ENCODE measurements at regions of chr22 and their contacts with region 1.

Region 1: DNA sequence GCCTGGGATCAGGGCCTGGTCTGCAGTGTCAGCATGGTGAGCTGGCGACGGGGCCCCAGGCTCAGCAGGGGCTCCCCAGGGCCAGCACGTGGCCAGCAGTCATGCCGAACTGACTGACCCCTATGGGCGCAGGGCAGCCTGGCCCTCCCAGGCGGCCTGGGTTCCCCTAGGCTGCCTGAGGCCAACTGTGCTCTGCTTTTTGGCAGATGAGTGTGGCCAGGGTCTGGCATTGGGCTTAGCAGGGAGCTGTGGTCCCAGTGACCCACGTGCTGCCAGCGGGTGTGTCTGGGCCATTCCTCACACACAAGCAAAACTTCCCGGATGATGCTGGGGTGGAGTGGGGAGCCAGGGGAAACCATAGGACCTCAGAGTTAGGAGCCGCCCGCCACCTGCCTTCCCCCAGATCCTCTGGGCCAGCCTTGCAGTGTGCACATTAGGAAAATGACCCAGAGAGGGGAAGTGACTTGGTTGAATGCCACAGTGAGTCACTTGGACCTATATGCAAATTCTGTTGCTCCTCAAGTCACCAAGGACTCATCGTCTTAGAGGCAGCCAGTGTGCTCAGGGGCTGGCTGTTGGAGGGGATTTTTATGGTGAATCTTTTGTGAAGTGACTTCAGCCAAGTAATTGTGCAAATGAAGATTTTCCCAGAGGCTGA is 6.5 kb downstream of the ADORA2A start:
- DNase-seq: no peak
- ATAC-seq: peak; percentile 81
- H3K4me3 Mint-ChIP-seq: peak overlapping the region; percentile 70
- H3K27ac Mint-ChIP-seq: peak overlapping the region; percentile 99
- H3K4me1 Mint-ChIP-seq: peaks cover 92% of the 10 kb centered on the region
- H3K27me3 Mint-ChIP-seq: no peaks in the 10 kb centered on the region

Region 2: GRCh38 chr22:24011735-24012068 is 422.2 kb before region 1 on chr22:
- CTCF ChIA-PET with region 1: no interaction called
- POLR2A ChIA-PET with region 1: no interaction called
- intact Hi-C with region 1: loop called in 1 of 2 experiments (anchors 5 kb)
- DNase-seq: no peak
- ATAC-seq: no peak
- H3K4me3 Mint-ChIP-seq: peak overlapping the region; percentile 92
- H3K27ac Mint-ChIP-seq: peak overlapping the region; percentile 94
- H3K4me1 Mint-ChIP-seq: peaks cover 27% of the 10 kb centered on the region
- H3K27me3 Mint-ChIP-seq: no peaks in the 10 kb centered on the region

Region 3: DNA sequence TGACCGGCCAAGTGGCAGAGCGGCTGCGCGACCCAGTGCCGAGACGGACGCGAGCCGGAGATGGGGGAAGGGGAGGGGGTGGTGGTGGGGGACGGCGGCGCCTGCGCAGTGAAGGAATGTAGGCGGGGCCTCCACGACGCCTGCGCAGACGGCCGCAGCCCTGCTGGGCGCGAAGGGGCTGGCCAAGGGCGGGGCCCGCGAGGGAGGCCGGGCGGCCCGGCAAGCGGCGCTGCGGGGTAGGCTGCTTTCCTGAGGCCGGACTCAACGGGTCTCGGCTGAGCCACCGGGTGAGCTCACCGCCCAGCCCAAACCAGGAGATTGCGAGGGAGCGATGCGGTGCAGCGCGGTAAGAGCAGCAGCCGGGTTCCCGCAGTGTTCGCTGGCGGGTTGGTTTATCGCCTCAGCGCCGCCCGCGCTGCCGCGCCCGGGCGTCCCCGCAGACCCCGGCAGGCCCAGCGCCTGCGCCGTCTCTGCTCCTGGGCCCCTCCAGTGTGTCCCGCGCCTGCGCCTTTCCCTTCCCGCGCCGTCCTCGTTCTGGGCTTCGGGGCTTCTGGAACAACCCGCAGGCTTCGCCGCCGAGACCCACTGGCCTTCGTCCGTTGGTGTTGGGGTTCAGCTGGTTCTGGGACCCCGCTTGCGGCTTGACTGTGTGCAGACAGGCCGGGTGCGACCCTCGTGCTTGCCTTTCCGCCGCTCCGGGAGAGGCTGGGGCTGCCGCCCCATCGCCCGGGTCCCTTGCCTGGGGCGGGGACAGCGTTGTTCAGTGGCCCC is 163.1 kb before region 1 on chr22 and contains the start of gene SPECC1L:
- CTCF ChIA-PET with region 1: no interaction called
- POLR2A ChIA-PET with region 1: no interaction called
- intact Hi-C with region 1: loop called (anchors 1 to 5 kb)
- DNase-seq: peak; percentile 95
- ATAC-seq: peak; percentile 90
- H3K4me3 Mint-ChIP-seq: peak within 1 kb of the TSS; percentile 78
- H3K27ac Mint-ChIP-seq: peak within 1 kb of the TSS; percentile 82
- H3K4me1 Mint-ChIP-seq: peaks cover 38% of the 10 kb centered on the region
- H3K27me3 Mint-ChIP-seq: no peaks in the 10 kb centered on the region
- total RNA-seq, gene SPECC1L: 31.5 to 38.2 TPM

Region 4: GRCh38 chr22:24402460-24403192 is 31.3 kb before region 1 on chr22:
- CTCF ChIA-PET with region 1: interaction called, 3 read pairs
- POLR2A ChIA-PET with region 1: interaction called, 3 read pairs
- intact Hi-C with region 1: loop called in 1 of 2 experiments (anchors 1 kb)
- DNase-seq: peak; percentile 24
- ATAC-seq: peak; percentile 37
- H3K4me3 Mint-ChIP-seq: no peak overlapping the region
- H3K27ac Mint-ChIP-seq: peak overlapping the region; percentile 25
- H3K4me1 Mint-ChIP-seq: peaks cover 62% of the 10 kb centered on the region
- H3K27me3 Mint-ChIP-seq: no peaks in the 10 kb centered on the region

Region 5: GRCh38 chr22:24486501-24486921 is 52.6 kb after region 1 on chr22:
- CTCF ChIA-PET with region 1: no interaction called
- POLR2A ChIA-PET with region 1: interaction called, 4 read pairs
- intact Hi-C with region 1: loop called in 1 of 2 experiments (anchors 1 kb)
- DNase-seq: peak; percentile 62
- ATAC-seq: peak; percentile 96
- H3K4me3 Mint-ChIP-seq: no peak overlapping the region
- H3K27ac Mint-ChIP-seq: peak overlapping the region; percentile 35
- H3K4me1 Mint-ChIP-seq: peaks cover 26% of the 10 kb centered on the region
- H3K27me3 Mint-ChIP-seq: no peaks in the 10 kb centered on the region

Region 6: GRCh38 chr22:25067851-25068421 is 634.0 kb after region 1 on chr22:
- CTCF ChIA-PET with region 1: no interaction called
- POLR2A ChIA-PET with region 1: no interaction called
- intact Hi-C with region 1: loop called in 1 of 2 experiments (anchors 5 kb)
- DNase-seq: peak; percentile 90
- ATAC-seq: peak; percentile 74
- H3K4me3 Mint-ChIP-seq: peak overlapping the region; percentile 78
- H3K27ac Mint-ChIP-seq: peak overlapping the region; percentile 93
- H3K4me1 Mint-ChIP-seq: peaks cover 88% of the 10 kb centered on the region
- H3K27me3 Mint-ChIP-seq: no peaks in the 10 kb centered on the region